ENCODE measurements at regions of chr3 and their contacts with region 1.

Region 1: GRCh38 chr3:192917404-192918274 is at the start of gene MB21D2:
- DNase-seq: peak; percentile 73
- H3K4me3 Mint-ChIP-seq: peak within 1 kb of the TSS; percentile 95
- H3K27ac Mint-ChIP-seq: peak within 1 kb of the TSS; percentile 96
- H3K4me1 Mint-ChIP-seq: peaks cover 46% of the 10 kb centered on the region
- H3K27me3 Mint-ChIP-seq: peaks cover 17% of the 10 kb centered on the region
- total RNA-seq, gene MB21D2: 17.0 and 18.0 TPM in 2 replicates

Region 2: DNA sequence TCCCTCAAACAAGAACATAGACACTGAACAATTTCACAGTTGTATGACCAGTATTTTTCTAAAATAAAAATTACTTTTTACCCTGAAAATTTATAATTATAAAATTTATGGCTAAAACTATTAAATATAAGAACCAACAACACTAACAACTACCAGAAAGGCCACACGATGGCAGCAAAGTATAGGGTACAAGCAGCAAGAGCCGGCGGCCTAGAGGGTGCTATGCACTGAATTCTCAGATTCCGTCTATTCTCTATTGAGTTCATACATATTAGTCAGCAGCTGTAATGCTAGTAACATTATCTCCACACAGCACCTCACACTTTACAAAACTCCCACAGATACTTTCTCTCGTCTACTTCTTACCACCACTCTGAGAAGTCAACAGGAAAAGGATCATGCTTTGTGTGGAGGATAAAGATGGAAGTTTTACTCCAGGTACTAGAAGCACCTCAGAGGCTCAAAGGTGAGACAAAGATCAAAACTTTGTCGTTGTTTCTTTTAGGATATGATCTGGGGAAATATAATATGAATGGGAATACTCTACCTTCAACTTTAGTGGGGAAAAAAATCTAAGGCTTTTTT is 350.8 kb before region 1 on chr3:
- intact Hi-C with region 1: loop called (anchors 5 kb)
- DNase-seq: peak; percentile 41
- H3K4me3 Mint-ChIP-seq: no peak overlapping the region
- H3K27ac Mint-ChIP-seq: no peak overlapping the region
- H3K4me1 Mint-ChIP-seq: peaks cover 9% of the 10 kb centered on the region
- H3K27me3 Mint-ChIP-seq: peaks cover 14% of the 10 kb centered on the region

Region 3: GRCh38 chr3:192831111-192831644 is 86.5 kb before region 1 on chr3:
- intact Hi-C with region 1: loop called (anchors 1 kb)
- DNase-seq: peak; percentile 15
- H3K4me3 Mint-ChIP-seq: peak overlapping the region; percentile 25
- H3K27ac Mint-ChIP-seq: peak overlapping the region; percentile 88
- H3K4me1 Mint-ChIP-seq: peaks cover 67% of the 10 kb centered on the region
- H3K27me3 Mint-ChIP-seq: no peaks in the 10 kb centered on the region

Region 4: DNA sequence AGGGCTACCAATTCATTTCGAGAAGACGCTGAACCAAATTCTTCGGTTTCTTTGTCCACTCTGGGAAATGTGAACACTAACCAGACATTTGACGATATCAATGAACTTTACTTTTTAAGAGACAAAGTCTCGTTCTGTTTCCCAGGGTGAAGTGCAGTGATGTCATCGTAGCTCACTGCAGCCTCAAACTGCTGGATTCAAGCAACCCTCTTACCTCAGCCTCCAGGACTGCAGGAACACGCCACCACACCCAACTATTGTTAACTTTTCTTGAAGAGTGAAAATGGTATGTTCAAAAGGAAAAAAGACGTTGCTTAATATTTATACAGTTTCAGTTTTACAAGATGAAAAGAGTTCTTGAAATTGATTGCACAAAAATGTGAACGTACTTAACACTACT is 30.6 kb before region 1 on chr3:
- intact Hi-C with region 1: loop called (anchors 1 kb)
- DNase-seq: no peak
- H3K4me3 Mint-ChIP-seq: peak overlapping the region; percentile 54
- H3K27ac Mint-ChIP-seq: peak overlapping the region; percentile 69
- H3K4me1 Mint-ChIP-seq: peaks cover 82% of the 10 kb centered on the region
- H3K27me3 Mint-ChIP-seq: peaks cover 2% of the 10 kb centered on the region

Region 5: GRCh38 chr3:192899540-192899982 is 18.1 kb before region 1 on chr3:
- intact Hi-C with region 1: loop called (anchors 1 kb)
- DNase-seq: no peak
- H3K4me3 Mint-ChIP-seq: peak overlapping the region; percentile 41
- H3K27ac Mint-ChIP-seq: peak overlapping the region; percentile 79
- H3K4me1 Mint-ChIP-seq: peaks cover 74% of the 10 kb centered on the region
- H3K27me3 Mint-ChIP-seq: no peaks in the 10 kb centered on the region

Region 6: DNA sequence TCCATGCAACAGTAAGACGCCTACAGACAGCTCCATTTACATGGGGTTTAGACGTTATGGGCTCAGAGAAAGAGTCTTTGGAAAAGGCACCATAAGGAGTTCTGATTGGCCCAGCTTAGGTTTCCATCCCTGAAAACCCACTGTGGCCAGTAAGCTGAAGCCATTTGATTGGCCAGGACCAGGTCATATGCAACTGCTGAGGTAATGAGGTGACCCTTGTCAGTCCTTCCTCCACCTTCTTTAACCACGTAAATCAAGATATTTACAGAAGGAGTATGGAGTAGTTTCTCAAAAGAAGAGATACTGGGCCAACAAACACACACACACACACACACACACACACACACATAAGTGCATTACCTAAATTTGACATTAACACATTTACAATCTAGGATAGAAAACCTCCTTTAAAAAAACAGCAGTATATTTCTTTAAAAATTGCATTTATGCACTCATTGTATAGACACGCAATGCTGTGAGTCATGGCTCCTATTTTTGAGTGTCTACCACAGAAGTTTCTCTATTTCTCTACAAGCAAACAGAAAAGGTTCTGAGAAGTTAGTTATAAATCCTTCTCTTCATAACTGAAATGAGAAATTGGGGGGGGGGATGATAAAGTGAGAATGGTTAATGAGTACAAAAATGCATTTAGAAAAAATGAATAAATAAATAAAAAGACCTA is 16.3 kb after region 1 on chr3:
- intact Hi-C with region 1: loop called (anchors 1 kb)
- DNase-seq: no peak
- H3K4me3 Mint-ChIP-seq: no peak overlapping the region
- H3K27ac Mint-ChIP-seq: peak overlapping the region; percentile 53
- H3K4me1 Mint-ChIP-seq: peaks cover 12% of the 10 kb centered on the region
- H3K27me3 Mint-ChIP-seq: peaks cover 4% of the 10 kb centered on the region

Region 7: DNA sequence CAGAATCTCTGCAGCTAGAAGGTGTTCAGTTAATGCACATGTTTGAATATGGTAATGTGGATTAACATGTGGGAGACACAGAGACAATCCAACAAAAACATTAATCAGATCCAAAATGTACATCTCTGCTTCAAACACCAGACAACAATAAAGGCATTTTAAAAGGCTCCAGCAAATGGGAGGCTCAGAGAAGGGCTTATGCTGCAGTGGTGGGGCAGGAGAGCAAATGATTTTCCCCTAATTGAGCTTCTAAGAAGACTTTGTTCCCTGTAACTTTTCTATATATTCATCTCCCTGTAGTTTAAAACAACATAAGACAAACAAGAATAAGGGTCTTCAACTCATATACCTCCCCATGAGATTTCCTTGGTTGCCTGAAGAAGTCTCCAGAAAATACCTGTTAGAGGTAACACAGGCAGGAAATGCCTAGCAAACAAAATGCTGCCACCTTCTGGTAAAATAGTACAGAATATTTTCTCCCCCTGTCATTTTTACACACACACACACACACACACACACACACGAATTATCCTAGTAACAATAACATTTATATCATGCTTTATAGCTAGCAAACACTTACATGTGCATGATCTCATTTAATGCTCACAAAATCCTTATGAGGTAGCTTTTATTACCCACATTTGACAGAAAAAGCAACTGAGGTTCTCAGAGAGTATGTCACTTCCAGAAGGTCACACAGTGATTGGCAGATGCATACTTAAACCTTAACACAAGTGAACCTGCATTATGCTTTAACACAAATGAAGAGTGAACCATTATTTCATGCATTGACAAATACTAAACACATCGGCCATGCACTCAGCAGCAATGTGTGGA is 123.4 kb after region 1 on chr3:
- intact Hi-C with region 1: loop called (anchors 1 kb)
- DNase-seq: no peak
- H3K4me3 Mint-ChIP-seq: no peak overlapping the region
- H3K27ac Mint-ChIP-seq: no peak overlapping the region
- H3K4me1 Mint-ChIP-seq: peaks cover 10% of the 10 kb centered on the region
- H3K27me3 Mint-ChIP-seq: peaks cover 8% of the 10 kb centered on the region

Region 8: GRCh38 chr3:193078996-193079753 is 161.5 kb after region 1 on chr3:
- intact Hi-C with region 1: no loop called
- DNase-seq: no peak
- H3K4me3 Mint-ChIP-seq: no peak overlapping the region
- H3K27ac Mint-ChIP-seq: no peak overlapping the region
- H3K4me1 Mint-ChIP-seq: no peaks in the 10 kb centered on the region
- H3K27me3 Mint-ChIP-seq: peaks cover 13% of the 10 kb centered on the region

Measured in activated T-helper 1 cell treated with anti-CD3 and anti-CD28 coated beads, Interleukin-12 subunit alpha, Interleukin-12 subunit beta, Interleukin-2, Interleukin-4 antibody, amounts not matched to agents 30 ng/mL and 10 ng/mL and 1 ng/mL, durations not matched to agents 14 hours and 24 hours and 36 hours (primary cell).